ENCODE measurements at regions of chr14 and their contacts with region 1.

Region 1: DNA sequence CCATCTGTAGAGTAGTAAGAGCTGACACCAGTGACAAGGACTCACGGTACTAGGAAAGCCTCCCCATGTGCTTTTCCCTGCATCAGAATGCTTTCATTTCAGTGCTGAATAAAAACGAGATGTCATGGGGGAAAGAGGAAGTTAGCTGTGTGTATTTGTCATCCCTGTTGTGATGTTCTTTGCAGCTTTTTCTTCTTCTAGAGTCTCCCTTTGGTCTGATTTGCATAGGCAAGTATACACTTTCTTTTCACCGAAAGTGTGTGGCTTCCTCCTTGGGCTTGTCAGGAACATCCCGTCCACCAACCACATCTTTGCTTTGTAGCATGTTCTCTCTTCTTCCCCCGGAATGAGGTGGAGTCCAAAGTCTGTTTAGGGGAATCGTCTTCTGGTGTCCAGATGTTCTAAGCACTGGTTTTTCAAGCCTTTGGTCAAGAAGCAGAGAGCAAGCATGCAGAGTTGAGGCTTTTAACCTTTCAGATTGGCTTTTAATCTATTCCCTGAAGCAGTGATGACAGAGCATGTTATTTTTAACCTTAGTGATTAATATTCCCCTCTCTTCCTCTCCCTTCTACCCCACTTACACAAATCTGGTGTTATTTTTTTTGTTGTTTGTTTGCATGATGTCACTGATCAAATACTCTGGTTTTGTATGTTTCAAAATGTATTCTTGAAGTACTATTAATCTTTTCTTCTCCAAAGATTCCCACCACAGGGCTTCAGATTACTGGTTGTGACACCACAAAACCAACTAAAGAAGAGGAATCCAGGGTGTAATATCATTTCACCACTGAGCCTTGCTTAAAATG is 163.4 kb downstream of the SAMD4A start:
- DNase-seq: peak; percentile 48
- H3K4me3 Mint-ChIP-seq: peak overlapping the region; percentile 28
- H3K27ac Mint-ChIP-seq: peak overlapping the region; percentile 56
- H3K4me1 Mint-ChIP-seq: peaks cover 36% of the 10 kb centered on the region
- H3K27me3 Mint-ChIP-seq: peaks cover 40% of the 10 kb centered on the region

Region 2: GRCh38 chr14:54488646-54489317 is 241.6 kb before region 1 on chr14 and contains the start of gene GMFB:
- intact Hi-C with region 1: loop called (anchors 1 kb)
- DNase-seq: peak; percentile 79
- H3K4me3 Mint-ChIP-seq: peak within 1 kb of the TSS; percentile 87
- H3K27ac Mint-ChIP-seq: peak within 1 kb of the TSS; percentile 88
- H3K4me1 Mint-ChIP-seq: peaks cover 57% of the 10 kb centered on the region
- H3K27me3 Mint-ChIP-seq: no peaks in the 10 kb centered on the region
- total RNA-seq, gene GMFB: 39.5 and 39.7 TPM in 2 replicates

Region 3: GRCh38 chr14:54565785-54566409 is 164.5 kb before region 1 on chr14:
- intact Hi-C with region 1: loop called (anchors 1 kb)
- DNase-seq: peak; percentile 61
- H3K4me3 Mint-ChIP-seq: peak overlapping the region; percentile 75
- H3K27ac Mint-ChIP-seq: no peak overlapping the region
- H3K4me1 Mint-ChIP-seq: peaks cover 21% of the 10 kb centered on the region
- H3K27me3 Mint-ChIP-seq: peaks cover 54% of the 10 kb centered on the region

Region 4: GRCh38 chr14:54627540-54628363 is 102.6 kb before region 1 on chr14:
- intact Hi-C with region 1: loop called (anchors 1 kb)
- DNase-seq: peak; percentile 36
- H3K4me3 Mint-ChIP-seq: peak overlapping the region; percentile 62
- H3K27ac Mint-ChIP-seq: peak overlapping the region; percentile 49
- H3K4me1 Mint-ChIP-seq: peaks cover 36% of the 10 kb centered on the region
- H3K27me3 Mint-ChIP-seq: no peaks in the 10 kb centered on the region

Region 5: DNA sequence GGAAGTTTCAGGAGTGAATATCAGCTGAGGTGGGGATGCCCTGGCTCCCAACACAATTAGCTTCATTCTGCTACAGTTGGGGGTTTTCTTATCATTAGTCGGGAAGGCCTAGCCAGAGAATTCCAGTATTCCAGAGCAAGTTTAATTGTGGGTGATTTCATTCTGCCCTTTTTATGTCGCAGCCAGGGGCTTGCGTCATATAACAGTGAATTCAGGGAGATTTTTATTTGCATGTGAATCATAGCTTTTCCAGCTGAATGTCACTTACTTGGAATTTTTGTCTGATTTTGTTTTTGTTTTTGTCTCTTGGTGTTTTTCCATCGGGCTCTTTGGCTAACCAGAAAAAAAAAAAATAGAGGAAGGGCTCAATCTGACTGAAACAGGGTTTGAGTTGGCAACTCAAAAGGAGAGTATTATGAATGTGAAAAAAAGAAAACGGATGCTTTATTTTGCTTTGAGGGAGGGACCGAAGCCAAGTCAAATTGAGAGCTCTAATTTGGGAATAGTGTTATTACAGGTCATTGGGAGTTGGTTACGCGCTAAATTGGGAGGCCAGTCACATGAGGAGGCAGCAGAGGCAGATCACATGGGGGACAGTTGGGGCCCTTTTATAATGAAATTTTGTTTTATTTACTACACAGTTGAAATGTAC is 44.0 kb before region 1 on chr14:
- intact Hi-C with region 1: loop called (anchors 5 kb)
- DNase-seq: no peak
- H3K4me3 Mint-ChIP-seq: no peak overlapping the region
- H3K27ac Mint-ChIP-seq: no peak overlapping the region
- H3K4me1 Mint-ChIP-seq: peaks cover 17% of the 10 kb centered on the region
- H3K27me3 Mint-ChIP-seq: peaks cover 26% of the 10 kb centered on the region

Region 6: GRCh38 chr14:54742492-54743350 is 12.4 kb after region 1 on chr14:
- intact Hi-C with region 1: loop called (anchors 1 kb)
- DNase-seq: no peak
- H3K4me3 Mint-ChIP-seq: peak overlapping the region; percentile 10
- H3K27ac Mint-ChIP-seq: no peak overlapping the region
- H3K4me1 Mint-ChIP-seq: peaks cover 41% of the 10 kb centered on the region
- H3K27me3 Mint-ChIP-seq: peaks cover 27% of the 10 kb centered on the region